ENCODE measurements at regions of chr5 and their contacts with region 1.

Region 1: GRCh38 chr5:173625696-173626504 is 9.4 kb upstream of the BOD1 start:
- DNase-seq: peak; percentile 52
- CTCF ChIP-seq: peak; percentile 60

Region 2: DNA sequence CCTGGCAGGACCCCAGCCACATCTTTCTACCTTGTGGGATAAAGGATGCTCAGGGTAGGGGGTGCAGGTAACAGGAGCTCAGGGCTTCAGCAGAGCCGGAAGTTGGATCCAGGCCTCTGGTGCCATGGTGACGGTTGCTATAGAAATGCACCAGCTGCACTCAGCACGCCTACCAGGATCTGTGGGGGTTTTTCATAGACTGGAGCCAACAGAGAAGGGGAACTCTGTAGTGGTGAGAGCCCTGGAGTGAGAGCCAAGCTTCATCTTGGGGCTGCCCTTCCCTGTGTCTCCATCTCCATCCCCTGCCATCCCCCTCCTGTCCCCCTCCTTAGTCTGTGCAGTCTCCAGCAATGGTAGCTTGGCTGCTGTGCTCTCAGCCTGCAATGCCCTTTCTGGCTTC is 18.1 kb after region 1 on chr5:
- CTCF ChIA-PET with region 1: interaction called, 63 read pairs
- POLR2A ChIA-PET with region 1: no interaction called
- DNase-seq: peak; percentile 58
- CTCF ChIP-seq: no peak

Region 3: GRCh38 chr5:173839117-173839713 is 213.3 kb after region 1 on chr5:
- CTCF ChIA-PET with region 1: no interaction called
- POLR2A ChIA-PET with region 1: no interaction called
- DNase-seq: no peak
- CTCF ChIP-seq: no peak

Region 4: GRCh38 chr5:173981362-173981761 is 355.5 kb after region 1 on chr5:
- CTCF ChIA-PET with region 1: interaction called, 10 read pairs
- POLR2A ChIA-PET with region 1: no interaction called
- DNase-seq: no peak
- CTCF ChIP-seq: no peak

Measured in GM10248 (cell line).